Uterus (tissue), 4 donors: ENCODE measurements at regions of chr2 and their contacts with region 1.

Region 1: DNA sequence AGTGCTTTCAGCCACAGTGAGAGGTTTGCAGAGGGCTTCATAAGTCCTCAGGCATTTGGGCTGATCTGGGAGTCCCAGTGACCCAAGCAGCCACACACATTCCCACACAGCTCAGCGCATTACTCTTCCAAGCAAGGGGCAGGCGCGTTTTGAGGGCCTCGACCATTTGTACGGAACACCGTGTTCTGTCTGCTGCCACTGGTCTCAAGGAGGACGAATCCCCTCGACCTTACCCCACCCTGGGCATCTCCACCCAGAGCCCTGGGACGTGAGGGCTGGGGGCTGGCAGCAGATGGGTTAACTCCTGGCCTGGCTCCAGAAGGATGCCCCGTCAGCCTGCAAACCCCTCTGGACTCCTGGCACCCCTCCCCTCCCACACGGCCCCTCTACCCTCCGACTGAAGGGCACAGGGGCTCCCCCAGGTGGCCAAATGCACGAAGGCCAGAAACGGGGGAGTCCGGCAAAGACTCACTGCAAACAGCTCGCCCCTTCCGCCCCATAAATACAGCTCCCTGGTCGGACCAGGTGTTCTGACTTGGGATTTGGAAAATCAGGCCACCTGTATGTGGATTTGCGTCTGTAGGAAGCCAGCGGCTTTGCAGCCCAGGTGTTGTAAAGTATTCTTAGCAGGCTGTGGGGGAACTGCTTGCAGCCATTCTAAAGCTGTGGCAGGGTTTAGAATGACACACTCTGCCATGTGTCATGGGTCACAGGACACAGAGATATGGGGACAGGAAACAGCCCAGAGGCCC is 33.6 kb upstream of the PTMA start:
- DNase-seq: peak; percentile 74 to 80
- H3K4me3 ChIP-seq: no peak overlapping the region
- H3K27ac ChIP-seq: peak overlapping the region; percentile 87 to 88
- H3K4me1 ChIP-seq: peaks cover 0 to 6% of the 10 kb centered on the region in 2 donors
- H3K27me3 ChIP-seq: no peaks in the 10 kb centered on the region
- CTCF ChIP-seq: peak; percentile 83 to 93 (median 89)
- POLR2A ChIP-seq: no peak

Region 2: GRCh38 chr2:231612179-231613053 is 62.3 kb before region 1 on chr2:
- intact Hi-C with region 1: loop called (anchors 2 kb)
- DNase-seq: peak; percentile 95 to 96
- H3K4me3 ChIP-seq: no peak overlapping the region
- H3K27ac ChIP-seq: peak overlapping the region; percentile 99 to 100
- H3K4me1 ChIP-seq: peaks cover 8 to 21% of the 10 kb centered on the region in 2 donors
- H3K27me3 ChIP-seq: no peaks in the 10 kb centered on the region
- CTCF ChIP-seq: peak; percentile 93 to 99 (median 98)
- POLR2A ChIP-seq: peak in 1 of 2 donors; percentile 34

Region 3: DNA sequence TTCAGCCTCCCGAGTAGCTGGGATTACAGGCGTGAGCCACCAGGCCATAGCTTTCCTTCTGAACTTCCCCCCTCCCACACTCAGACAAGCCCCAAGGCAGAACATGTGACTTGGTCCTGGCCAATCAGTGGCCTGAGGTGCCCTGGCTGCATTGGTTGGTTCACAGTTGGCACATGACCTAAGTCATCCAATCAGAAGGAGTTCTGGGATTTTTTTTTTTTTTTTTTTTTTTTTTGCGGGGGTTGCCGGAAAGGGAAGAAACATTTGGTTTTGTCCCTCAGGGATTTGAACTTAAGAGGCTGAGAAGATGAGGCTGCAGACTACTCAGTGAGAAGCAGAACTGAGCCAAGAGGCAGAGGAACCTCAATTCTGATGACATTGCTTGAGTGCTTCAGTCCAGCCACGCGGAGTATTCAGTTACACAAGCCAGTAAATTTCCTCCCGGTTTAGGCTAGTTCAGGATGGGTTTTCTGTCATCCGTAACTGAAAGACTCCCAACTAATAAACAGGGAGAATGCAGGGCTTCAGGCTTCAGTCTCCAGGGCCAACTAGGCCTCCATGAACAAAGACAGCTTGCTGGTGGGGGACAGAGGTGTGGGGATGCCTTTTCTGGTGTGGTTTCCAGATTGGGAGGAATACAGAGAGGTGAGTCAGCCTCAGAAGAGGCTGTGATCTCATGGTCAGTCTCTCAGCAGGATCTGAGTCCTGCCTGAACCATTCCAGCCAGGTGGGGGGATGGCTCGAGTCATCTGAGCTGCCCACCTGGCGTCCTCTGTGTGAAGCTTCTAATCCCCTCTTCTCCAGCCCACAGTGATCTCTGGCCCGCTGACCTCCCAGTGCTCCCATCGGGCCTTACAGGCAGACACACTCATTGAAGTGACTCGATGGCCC is 42.8 kb after region 1 on chr2:
- intact Hi-C with region 1: loop called (anchors 2 kb)
- DNase-seq: no peak
- H3K4me3 ChIP-seq: no peak overlapping the region
- H3K27ac ChIP-seq: no peak overlapping the region
- H3K4me1 ChIP-seq: peaks cover 0 to 4% of the 10 kb centered on the region in 2 donors
- H3K27me3 ChIP-seq: no peaks in the 10 kb centered on the region
- CTCF ChIP-seq: no peak
- POLR2A ChIP-seq: no peak

Region 4: GRCh38 chr2:232276084-232276732 is 601.4 kb after region 1 on chr2:
- intact Hi-C with region 1: no loop called
- DNase-seq: no peak
- H3K4me3 ChIP-seq: no peak overlapping the region
- H3K27ac ChIP-seq: no peak overlapping the region
- H3K4me1 ChIP-seq: no peaks in the 10 kb centered on the region
- H3K27me3 ChIP-seq: no peaks in the 10 kb centered on the region
- CTCF ChIP-seq: no peak
- POLR2A ChIP-seq: no peak